MCF 10A (cell line): ENCODE measurements at regions of chr10 and their contacts with region 1.

Region 1: DNA sequence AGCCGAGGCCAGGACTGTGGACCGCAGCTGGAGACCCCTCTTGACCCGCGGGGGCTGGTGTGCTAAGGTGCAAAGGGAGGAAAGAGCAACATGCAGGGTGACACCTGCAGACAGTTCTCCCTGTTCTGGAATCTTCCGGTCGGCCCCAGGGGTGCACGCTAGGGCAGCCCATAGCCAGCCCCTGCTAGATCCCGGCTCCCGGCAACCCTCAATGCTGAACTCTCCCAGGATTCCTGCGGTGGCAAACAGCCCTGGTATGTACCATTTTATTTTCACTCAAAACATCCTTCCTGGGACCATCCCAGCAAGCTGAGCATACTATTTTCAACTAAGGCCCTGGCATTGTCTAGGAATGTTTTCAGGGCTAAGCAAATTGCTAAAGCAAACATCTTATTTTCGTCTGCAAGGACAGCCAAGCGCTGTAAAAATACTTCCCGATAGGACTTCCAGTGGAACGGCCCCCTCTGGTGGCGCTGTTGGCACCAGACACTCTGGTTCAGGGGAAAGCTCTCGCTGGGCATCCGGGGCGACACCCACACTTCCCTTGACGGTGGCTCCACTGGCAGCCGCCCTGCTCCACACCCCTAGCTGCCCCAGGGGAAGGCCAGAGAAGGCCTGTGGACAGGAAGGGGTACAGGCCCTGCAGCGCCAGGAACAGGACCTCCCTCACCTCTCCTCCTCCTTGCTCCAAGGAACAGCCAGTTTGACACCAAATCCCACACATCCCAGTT is 99.4 kb downstream of the CTBP2 start:
- DNase-seq: peak; percentile 75
- H3K4me3 Mint-ChIP-seq: peak overlapping the region; percentile 19
- H3K27ac Mint-ChIP-seq: peak overlapping the region; percentile 73
- H3K4me1 Mint-ChIP-seq: peaks cover 46% of the 10 kb centered on the region
- H3K27me3 Mint-ChIP-seq: no peaks in the 10 kb centered on the region
- CTCF ChIP-seq: peak; percentile 72

Region 2: DNA sequence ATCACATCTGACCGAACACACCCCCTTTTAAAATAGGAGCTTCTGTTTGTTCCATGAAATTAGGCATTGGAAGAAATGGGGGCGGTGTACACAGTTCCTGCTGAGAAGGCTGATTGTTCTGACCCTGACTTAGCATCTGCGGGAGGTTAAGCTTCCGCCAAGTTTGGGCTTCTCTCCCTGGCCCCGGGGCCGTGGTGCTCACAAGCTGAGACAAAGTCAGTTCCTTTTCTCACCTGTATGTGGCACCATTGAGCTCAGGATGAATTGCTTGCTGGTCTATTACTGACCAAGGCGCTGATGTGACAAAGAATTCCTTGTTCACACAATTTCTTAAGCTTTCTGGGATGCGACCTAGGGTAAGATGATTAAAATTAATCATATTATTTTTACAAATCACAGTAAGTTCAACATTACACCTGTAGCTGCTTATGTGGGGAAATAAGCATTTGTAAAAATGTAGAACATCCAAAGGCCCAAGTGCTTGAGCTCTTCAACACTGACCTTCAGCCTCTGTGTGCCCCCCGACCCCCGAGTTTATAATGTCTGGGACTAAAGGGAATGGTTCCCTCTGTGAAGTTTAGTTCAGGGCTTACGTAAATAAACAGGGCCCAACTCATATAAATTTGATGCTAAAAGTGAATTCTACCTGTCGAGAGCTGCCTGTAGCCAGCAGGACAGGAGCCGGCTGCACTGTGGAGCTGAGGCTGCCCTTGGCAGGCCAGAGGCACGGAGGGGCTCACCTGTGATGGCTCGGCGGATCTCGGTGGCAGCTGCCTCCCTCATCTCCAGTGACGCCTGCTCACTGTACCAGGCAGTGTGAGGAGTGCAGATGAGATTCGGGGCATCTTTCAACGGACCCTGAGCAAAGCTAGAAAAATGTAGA is 68.3 kb before region 1 on chr10:
- CTCF ChIA-PET with region 1: interaction called, 7 read pairs
- POLR2A ChIA-PET with region 1: no interaction called
- intact Hi-C with region 1: loop called (anchors 2 kb)
- DNase-seq: peak; percentile 68
- H3K4me3 Mint-ChIP-seq: no peak overlapping the region
- H3K27ac Mint-ChIP-seq: no peak overlapping the region
- H3K4me1 Mint-ChIP-seq: no peaks in the 10 kb centered on the region
- H3K27me3 Mint-ChIP-seq: no peaks in the 10 kb centered on the region
- CTCF ChIP-seq: peak; percentile 50

Region 3: GRCh38 chr10:125089469-125089868 is 28.5 kb after region 1 on chr10:
- CTCF ChIA-PET with region 1: interaction called, 9 read pairs
- POLR2A ChIA-PET with region 1: interaction called, 11 read pairs
- intact Hi-C with region 1: no loop called
- DNase-seq: no peak
- H3K4me3 Mint-ChIP-seq: no peak overlapping the region
- H3K27ac Mint-ChIP-seq: peak overlapping the region; percentile 31
- H3K4me1 Mint-ChIP-seq: peaks cover 47% of the 10 kb centered on the region
- H3K27me3 Mint-ChIP-seq: no peaks in the 10 kb centered on the region
- CTCF ChIP-seq: no peak

Region 4: DNA sequence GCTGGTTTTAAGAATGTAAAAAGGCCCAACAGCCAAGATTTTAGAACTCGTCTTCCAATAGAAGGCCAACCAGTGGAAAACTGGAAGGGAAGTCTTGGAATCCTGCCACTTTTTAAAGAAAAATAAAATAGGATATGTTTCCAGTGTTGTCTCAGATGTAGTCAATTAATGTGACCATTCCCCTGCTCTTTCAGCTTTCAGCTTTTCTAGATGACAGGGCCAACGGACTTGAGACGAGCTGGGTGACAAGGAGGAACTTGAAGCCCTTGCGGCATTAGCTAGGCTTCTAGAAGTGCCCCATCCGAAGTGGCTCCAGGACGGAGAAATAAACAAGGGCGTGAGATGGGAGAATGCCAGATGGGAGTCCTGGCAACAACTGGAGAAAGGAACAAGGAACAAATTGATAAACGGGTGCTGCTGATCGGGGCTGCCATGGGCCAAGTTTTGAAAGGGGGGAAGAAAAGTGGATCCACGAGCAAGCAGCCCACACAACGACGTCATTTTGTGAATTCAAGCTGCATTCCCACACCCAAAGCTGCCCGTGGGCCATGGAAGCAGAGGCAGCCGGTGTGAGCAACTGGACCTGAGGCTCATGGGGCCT is 57.1 kb after region 1 on chr10:
- CTCF ChIA-PET with region 1: interaction called, 7 read pairs
- POLR2A ChIA-PET with region 1: interaction called, 24 read pairs
- intact Hi-C with region 1: no loop called
- DNase-seq: no peak
- H3K4me3 Mint-ChIP-seq: no peak overlapping the region
- H3K27ac Mint-ChIP-seq: no peak overlapping the region
- H3K4me1 Mint-ChIP-seq: peaks cover 32% of the 10 kb centered on the region
- H3K27me3 Mint-ChIP-seq: no peaks in the 10 kb centered on the region
- CTCF ChIP-seq: no peak

Region 5: DNA sequence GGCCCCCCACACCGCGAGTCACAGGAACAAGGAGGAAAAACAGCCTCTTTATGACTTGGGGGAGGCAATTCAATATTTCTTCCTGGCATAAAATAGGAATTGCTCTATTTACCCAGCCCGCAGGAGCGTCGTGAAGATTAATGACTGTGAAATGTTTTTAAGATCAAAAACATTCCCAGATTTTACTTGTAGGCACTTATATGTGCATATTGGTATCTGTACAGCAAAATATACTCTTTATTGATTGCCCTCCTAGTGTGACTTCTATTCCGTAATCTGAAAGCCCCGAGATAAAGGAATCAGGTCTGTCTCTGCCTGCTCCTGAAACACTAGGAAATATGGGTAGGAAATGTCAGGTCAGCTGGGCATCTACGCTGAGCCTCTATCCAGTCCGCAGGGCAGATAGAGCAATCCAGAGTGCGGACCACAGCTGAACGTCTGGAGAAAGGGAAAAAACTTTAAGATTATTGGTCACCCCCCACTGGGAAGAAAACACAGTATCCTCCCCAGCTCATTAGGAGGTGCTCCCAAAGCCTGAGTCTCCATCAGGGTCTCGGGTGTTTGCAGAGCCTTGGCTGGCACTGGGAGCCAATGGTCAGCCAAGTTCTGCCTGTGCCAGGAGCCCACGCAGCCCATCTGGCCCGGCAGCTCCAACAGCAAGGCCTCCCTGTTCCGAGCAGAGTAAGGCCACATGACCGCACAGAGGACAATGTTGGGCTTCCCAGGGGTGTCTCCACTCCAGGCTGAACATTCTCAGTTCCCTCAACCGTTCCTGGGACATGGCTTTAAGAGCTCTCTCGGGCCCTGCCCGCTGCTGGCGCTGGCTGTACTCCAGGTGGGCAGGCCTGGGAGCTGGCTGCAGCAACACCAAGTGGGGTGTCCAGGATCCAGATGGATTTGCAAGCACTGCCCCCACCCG is 91.7 kb after region 1 on chr10:
- CTCF ChIA-PET with region 1: interaction called, 4 read pairs
- POLR2A ChIA-PET with region 1: interaction called, 28 read pairs
- intact Hi-C with region 1: loop called (anchors 5 kb)
- DNase-seq: peak; percentile 54
- H3K4me3 Mint-ChIP-seq: peak overlapping the region; percentile 82
- H3K27ac Mint-ChIP-seq: peak overlapping the region; percentile 92
- H3K4me1 Mint-ChIP-seq: peaks cover 76% of the 10 kb centered on the region
- H3K27me3 Mint-ChIP-seq: no peaks in the 10 kb centered on the region
- CTCF ChIP-seq: no peak

Region 6: DNA sequence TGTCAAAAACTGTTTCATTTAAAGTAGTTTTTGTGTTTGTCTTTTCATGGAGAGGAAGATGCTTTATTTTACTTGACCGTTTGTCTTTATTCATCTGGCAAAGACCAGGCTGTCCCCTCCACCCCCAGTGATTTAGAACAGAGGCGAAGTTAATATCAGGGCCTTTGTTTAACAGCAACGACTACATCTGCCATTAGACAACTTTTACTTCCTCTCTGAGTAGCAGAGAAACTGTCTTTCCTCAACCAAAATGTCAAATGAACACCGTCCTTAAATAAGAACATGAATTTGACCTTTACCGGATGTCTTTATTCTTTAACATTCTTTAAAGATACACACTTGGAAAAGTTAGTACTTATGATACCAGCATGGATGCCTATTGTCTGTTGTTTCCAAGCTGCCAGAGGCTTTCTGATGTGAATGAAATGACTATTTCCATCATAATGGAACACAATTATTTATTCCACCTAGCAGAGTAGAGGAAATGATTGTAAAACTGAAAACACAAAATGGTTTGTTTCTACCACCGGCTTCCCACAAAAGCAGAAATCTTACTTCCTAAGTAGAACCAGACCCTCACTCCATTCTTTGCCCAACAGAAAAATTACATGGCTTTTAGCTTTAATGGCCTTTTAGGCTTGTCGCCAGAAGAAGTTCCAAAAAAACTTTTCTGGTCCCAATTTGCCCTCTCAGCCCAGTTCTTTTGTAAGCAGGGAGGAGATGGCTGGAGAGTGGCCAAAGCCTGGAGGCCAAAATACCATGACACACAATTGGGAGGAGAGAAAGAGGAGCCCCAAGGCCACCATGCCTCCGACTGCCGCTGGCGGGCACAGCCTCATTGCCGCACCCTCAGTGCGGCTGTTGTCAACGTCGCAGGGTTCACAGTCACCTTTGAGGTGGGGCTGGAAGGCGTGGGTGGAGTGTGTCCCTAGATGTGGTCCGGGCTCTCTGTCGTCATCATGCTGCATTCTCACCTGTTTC is 453.5 kb after region 1 on chr10:
- CTCF ChIA-PET with region 1: no interaction called
- POLR2A ChIA-PET with region 1: no interaction called
- intact Hi-C with region 1: no loop called
- DNase-seq: peak; percentile 62
- H3K4me3 Mint-ChIP-seq: no peak overlapping the region
- H3K27ac Mint-ChIP-seq: no peak overlapping the region
- H3K4me1 Mint-ChIP-seq: peaks cover 10% of the 10 kb centered on the region
- H3K27me3 Mint-ChIP-seq: peaks cover 37% of the 10 kb centered on the region
- CTCF ChIP-seq: no peak